ENCODE measurements at regions of chr2 and their contacts with region 1.

Region 1: DNA sequence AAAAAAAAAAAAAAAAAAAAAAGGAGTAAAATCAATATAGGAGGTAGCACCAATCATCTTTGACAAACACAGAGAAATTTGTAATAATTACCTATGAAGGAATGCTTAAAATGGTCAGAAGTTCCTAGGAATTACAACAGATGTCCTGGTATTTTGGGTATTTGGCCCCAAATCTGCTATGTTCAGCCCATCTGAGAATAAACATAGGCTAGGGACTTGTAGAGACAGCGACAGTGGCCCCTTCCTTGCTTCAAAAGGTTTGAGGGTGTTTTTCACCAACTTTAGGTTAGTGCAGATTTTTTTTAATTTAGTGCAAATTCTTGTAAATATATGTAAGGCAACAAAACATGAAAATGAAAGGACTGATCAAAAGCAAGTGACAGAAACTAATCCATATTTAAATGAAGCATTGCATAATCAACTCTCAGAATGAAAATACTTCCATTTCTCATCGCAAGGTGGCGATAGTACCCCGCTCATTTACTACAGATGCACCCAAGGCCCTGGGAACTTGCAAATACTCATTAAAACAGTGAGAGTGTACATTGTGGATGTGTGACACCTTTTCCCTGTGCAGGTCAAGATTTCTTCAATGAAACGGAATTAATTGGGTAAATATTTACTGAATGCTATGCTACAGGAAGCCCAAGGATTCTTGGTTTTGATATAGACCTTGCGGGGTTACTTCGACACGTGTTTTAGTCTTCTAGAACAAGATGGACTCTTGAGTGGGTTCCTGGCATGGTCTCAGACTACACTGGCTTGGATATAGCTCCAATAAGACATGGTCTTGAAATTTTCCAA is 44.6 kb downstream of the FAM124B start:
- DNase-seq: peak; percentile 69
- ATAC-seq: peak; percentile 82

Region 2: DNA sequence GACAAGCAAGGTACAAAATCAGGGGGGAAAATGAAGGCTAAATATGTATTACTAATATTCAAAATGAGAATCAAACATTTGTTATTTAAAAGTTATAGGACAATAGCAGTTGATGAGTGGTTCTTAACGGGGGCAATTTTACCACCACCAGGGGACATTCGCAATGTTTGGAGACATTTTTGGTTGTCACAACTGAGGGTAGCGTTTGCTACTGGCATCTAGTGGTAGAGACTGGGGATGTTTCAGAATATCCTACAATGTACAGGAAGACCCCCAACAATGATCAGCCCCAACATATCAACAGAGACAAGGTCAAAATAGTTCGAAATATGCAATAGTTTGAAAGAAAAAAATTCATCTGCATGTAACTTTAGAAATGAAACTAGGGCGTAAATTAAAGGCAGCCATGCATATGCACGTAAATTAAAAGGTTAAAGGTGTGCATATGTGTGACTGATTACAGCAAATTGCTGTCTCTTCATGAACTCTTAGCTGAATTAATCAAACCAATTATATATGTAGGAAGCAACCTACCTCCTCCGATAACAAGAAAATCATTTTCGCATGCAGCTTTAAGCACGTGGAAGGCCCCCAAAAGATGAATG is 289.0 kb after region 1 on chr2:
- intact Hi-C with region 1: loop called (anchors 5 kb)
- DNase-seq: no peak
- ATAC-seq: no peak